Mammary epithelial cell (primary cell): ENCODE measurements at regions of chr1 and their contacts with region 1.

Region 1: DNA sequence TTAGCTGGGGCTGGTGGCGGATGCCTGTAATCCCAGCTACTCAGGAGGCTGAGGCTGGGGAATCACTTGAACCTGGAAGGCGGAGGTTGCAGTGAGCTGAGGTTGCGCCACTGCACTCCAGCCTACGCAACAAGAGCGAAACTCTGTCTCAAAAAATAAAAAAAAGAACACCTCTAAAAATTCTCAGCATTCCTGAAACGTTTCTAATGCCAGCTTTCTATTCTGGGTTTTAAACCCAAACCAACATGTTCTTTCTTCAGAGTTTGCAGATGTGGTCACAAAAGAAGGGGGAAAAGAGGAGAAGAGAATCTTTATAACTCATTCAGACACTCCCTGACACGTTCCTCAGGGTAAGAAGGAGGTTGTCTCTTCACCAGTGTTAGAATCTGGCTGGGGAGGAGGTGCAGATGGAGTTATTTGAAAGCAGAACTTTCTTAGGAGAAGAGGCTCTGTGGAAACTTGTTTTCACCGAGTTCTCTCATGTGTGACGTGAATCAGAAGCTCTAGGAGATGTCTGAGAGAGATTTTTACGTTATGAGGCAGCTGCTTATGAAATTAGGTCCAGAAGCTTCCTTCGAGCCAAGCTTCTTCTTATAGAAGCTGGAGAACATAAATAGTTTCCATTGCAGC is 17.8 kb upstream of the CNR2 start:
- DNase-seq: peak; percentile 75
- H3K4me3 ChIP-seq: peak overlapping the region; percentile 27 to 30 (median 27)
- H3K27ac ChIP-seq: peak overlapping the region; percentile 73
- H3K4me1 ChIP-seq: peaks cover 8% of the 10 kb centered on the region
- H3K27me3 ChIP-seq: no peaks in the 10 kb centered on the region
- CTCF ChIP-seq: no peak

Region 2: GRCh38 chr1:23908493-23909341 is 22.3 kb before region 1 on chr1:
- CTCF ChIA-PET with region 1: interaction called, 18 read pairs
- dilution Hi-C with region 1: no loop called
- in situ Hi-C with region 1: no loop called
- intact Hi-C with region 1: no loop called
- DNase-seq: no peak
- H3K4me3 ChIP-seq: no peak overlapping the region
- H3K27ac ChIP-seq: no peak overlapping the region
- H3K4me1 ChIP-seq: peaks cover 7% of the 10 kb centered on the region
- H3K27me3 ChIP-seq: no peaks in the 10 kb centered on the region
- CTCF ChIP-seq: no peak

Region 3: GRCh38 chr1:24003331-24003972 is 72.5 kb after region 1 on chr1:
- CTCF ChIA-PET with region 1: no interaction called
- dilution Hi-C with region 1: no loop called
- in situ Hi-C with region 1: no loop called
- intact Hi-C with region 1: no loop called
- DNase-seq: peak; percentile 70
- H3K4me3 ChIP-seq: no peak overlapping the region
- H3K27ac ChIP-seq: no peak overlapping the region
- H3K4me1 ChIP-seq: no peaks in the 10 kb centered on the region
- H3K27me3 ChIP-seq: no peaks in the 10 kb centered on the region
- CTCF ChIP-seq: no peak

Region 4: DNA sequence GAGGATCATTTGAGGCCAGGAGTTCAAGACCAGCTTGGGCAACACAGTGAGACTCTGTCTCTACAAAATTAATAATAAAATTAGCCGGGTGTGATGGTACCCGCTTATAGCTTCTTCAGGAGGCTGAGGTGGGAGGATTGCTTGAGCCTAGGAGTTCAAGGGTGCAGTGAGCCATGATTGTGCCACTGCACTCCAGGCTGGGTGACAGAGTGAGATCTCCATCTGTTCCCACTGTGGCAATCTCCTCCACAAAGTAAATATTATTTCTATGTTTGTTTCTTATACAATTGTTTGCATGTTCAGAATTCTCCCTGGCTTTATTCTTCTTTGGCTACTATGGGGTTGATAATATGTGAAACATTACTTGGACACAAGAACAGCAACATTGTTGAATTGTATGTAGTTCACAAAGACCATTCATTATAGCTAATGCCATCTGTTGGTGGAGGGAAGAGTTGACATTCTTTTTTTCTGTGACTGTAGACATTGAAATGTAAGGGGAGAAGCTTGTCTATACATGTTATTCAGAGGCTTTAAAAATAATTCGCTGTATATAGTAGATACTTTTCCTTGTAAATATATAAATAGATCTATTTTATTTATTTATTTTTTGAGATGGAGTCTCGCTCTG is 97.0 kb after region 1 on chr1:
- CTCF ChIA-PET with region 1: no interaction called
- dilution Hi-C with region 1: loop called (anchors 5 kb)
- in situ Hi-C with region 1: no loop called
- intact Hi-C with region 1: no loop called
- DNase-seq: peak; percentile 47
- H3K4me3 ChIP-seq: no peak overlapping the region
- H3K27ac ChIP-seq: no peak overlapping the region
- H3K4me1 ChIP-seq: peaks cover under 1% of the 10 kb centered on the region
- H3K27me3 ChIP-seq: no peaks in the 10 kb centered on the region
- CTCF ChIP-seq: peak; percentile 58 to 66

Region 5: GRCh38 chr1:24080131-24080530 is 149.2 kb after region 1 on chr1:
- CTCF ChIA-PET with region 1: no interaction called
- dilution Hi-C with region 1: loop called (anchors 5 kb)
- in situ Hi-C with region 1: no loop called
- intact Hi-C with region 1: no loop called
- DNase-seq: no peak
- H3K4me3 ChIP-seq: no peak overlapping the region
- H3K27ac ChIP-seq: no peak overlapping the region
- H3K4me1 ChIP-seq: no peaks in the 10 kb centered on the region
- H3K27me3 ChIP-seq: no peaks in the 10 kb centered on the region
- CTCF ChIP-seq: no peak

Region 6: DNA sequence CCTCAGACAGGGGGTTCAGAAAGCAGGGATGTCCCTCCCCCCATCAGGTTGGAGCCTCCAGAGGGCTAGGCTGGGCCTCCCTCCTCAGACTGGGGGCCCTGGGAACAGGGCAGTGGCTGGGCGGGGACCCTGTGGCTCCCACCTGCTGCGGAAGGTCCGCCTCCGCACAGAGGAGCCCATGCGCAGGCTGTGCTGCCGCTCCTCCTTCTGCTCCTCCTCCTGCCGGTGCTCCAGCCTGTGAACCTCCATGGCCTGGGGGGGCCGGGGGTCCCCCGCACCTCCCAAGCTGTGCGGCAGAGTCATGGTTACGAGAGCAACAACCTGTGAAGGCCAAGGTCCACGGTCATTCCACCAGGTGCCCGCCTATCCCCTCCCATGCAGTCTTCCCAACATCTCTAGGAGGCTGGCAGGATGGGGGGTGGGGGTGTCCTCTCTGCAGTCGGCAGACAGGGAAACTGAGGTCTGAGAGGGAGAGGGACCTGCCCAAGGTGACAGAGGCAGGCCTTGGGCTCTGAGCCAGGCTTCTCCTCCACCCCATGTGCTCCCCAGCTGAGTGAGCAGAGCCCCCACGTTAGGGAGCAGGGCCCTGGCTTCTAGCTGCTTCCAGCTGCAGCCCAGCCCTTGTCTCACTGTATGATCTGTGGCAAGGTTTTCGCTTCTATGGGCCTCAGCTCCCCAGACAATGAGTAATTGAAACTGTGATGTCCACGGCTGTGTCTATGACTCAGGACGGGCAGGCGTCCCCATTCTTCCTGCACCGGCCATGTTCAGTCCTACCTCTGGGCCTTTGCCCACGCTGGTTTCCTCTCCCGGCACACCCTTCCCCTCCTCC is 177.6 kb after region 1 on chr1:
- CTCF ChIA-PET with region 1: no interaction called
- dilution Hi-C with region 1: no loop called
- in situ Hi-C with region 1: no loop called
- intact Hi-C with region 1: no loop called
- DNase-seq: peak; percentile 96
- H3K4me3 ChIP-seq: no peak overlapping the region
- H3K27ac ChIP-seq: peak overlapping the region; percentile 18
- H3K4me1 ChIP-seq: peaks cover 36% of the 10 kb centered on the region
- H3K27me3 ChIP-seq: no peaks in the 10 kb centered on the region
- CTCF ChIP-seq: no peak